MCF 10A (cell line): ENCODE measurements at regions of chr1 and their contacts with region 1.

Region 1: DNA sequence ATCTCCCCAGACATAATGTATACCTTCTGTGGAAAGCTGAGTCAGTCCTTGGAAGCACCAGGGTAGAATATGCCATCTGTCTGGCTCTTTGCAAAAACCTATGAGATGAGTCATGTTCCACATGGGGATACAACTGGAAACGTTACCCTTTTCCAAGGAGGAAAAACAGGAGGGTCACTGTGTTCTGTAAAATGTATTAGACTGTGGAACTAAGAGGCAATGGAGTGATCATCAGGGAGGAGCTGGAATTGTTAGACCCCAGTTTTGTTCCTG is 16.1 kb upstream of the PSMD4 start:
- DNase-seq: peak; percentile 68
- H3K4me3 Mint-ChIP-seq: no peak overlapping the region
- H3K27ac Mint-ChIP-seq: peak overlapping the region; percentile 29
- H3K4me1 Mint-ChIP-seq: peaks cover 12% of the 10 kb centered on the region
- H3K27me3 Mint-ChIP-seq: no peaks in the 10 kb centered on the region
- CTCF ChIP-seq: no peak

Region 2: GRCh38 chr1:151024540-151025146 is 213.8 kb before region 1 on chr1:
- CTCF ChIA-PET with region 1: no interaction called
- POLR2A ChIA-PET with region 1: no interaction called
- intact Hi-C with region 1: no loop called
- DNase-seq: peak; percentile 75
- H3K4me3 Mint-ChIP-seq: no peak overlapping the region
- H3K27ac Mint-ChIP-seq: no peak overlapping the region
- H3K4me1 Mint-ChIP-seq: no peaks in the 10 kb centered on the region
- H3K27me3 Mint-ChIP-seq: no peaks in the 10 kb centered on the region
- CTCF ChIP-seq: peak; percentile 83

Region 3: GRCh38 chr1:151198255-151199127 is 39.9 kb before region 1 on chr1 and contains the start of gene PIP5K1A:
- CTCF ChIA-PET with region 1: no interaction called
- POLR2A ChIA-PET with region 1: interaction called, 5 read pairs
- intact Hi-C with region 1: loop called (anchors 5 kb)
- DNase-seq: peak; percentile 100
- H3K4me3 Mint-ChIP-seq: peak within 1 kb of the TSS; percentile 93
- H3K27ac Mint-ChIP-seq: peak within 1 kb of the TSS; percentile 95
- H3K4me1 Mint-ChIP-seq: peaks cover 40% of the 10 kb centered on the region
- H3K27me3 Mint-ChIP-seq: no peaks in the 10 kb centered on the region
- CTCF ChIP-seq: no peak
- total RNA-seq, gene PIP5K1A: 150 and 163 TPM in 2 replicates